ENCODE measurements at regions of chr13 and their contacts with region 1.

Region 1: DNA sequence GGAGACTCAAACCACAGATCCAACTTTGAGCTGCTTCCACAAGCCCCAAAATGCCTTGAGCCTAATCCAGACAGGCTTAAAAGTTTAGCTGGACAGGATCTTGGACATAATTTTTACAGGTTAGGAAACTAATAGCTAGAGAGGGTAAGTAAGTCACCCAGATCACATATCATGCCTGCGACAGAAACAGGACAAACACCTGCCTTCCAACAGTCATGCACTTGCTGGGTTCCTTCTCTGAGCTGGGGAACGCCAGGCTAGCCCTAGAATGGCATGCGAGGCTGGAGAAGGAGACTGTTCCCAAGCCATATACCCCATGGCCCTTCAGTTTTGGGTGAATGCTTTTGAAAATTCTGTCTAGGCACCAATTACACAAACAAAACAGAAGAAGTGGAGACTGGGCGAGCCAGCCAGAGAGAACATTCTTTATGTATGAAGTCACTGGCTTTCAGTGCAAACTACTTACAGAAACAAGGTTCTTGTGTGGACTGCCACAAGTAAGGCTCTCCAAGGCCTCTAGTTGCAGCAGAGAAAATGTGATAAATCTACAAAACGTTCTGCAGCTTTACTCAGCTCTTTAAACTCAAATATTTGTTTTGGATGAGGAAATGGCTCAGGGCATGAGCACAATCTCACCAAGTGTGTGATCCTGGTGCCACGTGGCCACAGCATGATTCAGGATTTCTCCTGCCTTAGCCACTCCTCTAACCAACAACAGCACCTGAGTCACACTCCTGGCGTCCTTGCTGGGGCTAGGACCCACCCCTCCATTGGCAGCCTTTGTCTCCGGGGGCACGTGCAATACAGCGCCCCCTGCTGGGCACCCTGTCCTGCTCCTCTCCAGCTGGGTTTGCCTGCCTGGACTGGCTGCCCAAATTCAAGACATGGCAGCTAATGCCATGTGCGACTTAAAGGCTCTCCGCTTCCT is 73.4 kb upstream of the UBL3 start:
- DNase-seq: peak; percentile 81 to 96
- H3K4me3 ChIP-seq: no peak overlapping the region
- H3K27ac ChIP-seq: peak overlapping the region; percentile 85 to 93
- H3K4me1 ChIP-seq: peaks cover 15 to 36% of the 10 kb centered on the region in 2 donors
- H3K27me3 ChIP-seq: no peaks in the 10 kb centered on the region
- CTCF ChIP-seq: peak; percentile 80 to 92 (median 91)

Region 2: DNA sequence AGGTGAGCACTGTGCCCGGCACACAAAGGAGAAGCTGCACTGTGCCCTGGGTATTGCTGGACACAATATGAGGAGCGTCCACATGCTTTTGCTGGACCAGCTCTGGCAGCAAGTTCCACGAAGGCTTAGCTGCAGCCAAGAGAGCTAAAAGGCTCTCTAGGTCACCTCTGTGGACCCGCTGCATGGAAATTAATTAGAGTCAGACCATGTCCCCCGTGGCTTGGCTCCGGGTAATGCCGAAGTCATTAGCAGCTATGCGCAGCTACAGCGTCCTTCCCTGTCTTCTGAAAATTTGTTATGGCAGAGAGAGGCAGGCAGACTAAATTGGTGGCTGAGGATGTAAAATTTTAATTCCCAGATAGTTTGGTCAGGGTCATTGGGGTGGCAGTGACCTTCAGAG is 599.9 kb before region 1 on chr13:
- intact Hi-C with region 1: no loop called
- DNase-seq: no peak
- H3K4me3 ChIP-seq: no peak overlapping the region
- H3K27ac ChIP-seq: no peak overlapping the region
- H3K4me1 ChIP-seq: peaks cover 0 to 4% of the 10 kb centered on the region in 2 donors
- H3K27me3 ChIP-seq: no peaks in the 10 kb centered on the region
- CTCF ChIP-seq: no peak

Region 3: DNA sequence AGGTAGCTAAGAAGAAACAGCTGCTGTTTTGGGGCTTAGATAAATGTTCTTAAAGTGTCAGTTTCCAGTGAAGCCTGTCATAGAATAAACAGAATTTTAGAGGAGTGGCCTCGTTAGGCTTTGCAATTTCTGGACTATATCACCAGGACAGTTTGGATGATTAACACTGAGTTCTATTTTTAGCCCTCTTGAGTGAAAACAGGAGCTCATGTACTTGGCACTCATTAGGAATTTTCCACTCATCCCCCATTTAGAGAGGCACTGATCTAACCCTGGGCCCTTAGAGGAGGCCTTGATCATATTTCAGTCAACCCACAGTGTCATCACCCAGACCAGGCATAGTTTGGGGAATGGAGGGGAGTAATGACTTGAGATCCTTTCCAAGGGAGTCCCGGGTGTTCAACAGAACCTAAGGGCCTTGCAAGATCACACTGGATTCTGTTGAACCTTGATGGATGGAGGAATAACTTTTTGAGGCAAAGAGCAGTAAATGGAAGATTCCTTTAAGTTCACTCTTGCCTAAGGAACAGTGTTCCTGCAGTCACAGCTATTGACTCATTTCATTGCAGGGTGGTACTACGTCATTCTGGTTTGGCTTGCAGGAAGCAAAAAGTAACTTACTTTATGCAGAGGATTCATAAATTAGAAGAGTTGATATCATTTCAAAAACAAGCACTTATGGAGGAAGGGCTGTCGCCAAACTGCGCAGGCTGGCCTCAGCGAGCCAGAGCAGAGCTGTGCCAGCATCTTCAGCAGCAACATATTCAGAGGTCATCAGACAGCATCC is 488.5 kb before region 1 on chr13:
- intact Hi-C with region 1: loop called (anchors 2 kb)
- DNase-seq: peak in 1 of 2 donors; percentile 63
- H3K4me3 ChIP-seq: no peak overlapping the region
- H3K27ac ChIP-seq: peak overlapping the region; percentile 88 to 90
- H3K4me1 ChIP-seq: peaks cover 22 to 59% of the 10 kb centered on the region in 2 donors
- H3K27me3 ChIP-seq: no peaks in the 10 kb centered on the region
- CTCF ChIP-seq: no peak

Region 4: DNA sequence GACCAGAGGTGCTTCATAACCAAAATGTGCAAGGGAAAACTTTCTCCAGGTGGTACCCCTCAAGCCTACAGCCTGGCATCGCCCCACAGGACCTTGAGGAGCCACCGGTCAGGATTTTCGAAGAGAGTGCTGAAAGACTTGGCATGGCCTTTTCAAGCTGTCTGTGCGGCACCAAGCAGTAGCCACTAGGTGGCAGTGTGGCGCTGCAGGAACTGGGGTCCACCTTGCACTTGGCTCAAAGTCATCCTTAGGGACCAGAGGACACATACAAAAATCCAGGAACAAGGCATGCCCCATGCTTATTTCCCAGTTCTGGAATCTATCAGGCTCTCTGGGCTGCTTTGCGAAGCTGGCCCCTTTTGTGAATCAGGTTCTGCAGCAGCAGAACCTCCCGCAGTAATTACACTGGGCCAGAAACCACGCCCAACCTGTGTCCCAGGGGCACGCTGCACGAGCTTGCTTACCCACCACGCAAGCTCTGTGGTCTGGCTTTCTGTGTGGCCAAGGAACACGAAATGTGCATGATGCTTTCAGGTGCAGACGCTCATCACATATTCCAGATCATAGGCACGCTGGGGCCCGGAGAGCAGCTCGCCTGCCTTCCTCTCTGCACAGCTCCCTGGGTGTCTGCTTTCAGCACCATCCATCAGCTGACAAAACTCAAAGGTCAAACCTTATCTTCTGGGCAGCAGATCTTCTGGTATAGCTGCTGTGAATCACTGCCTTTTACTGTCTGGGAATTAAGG is 415.5 kb before region 1 on chr13:
- intact Hi-C with region 1: loop called (anchors 5 kb)
- DNase-seq: peak in 1 of 2 donors; percentile 89
- H3K4me3 ChIP-seq: peak overlapping the region in 1 of 2 donors; percentile 16
- H3K27ac ChIP-seq: no peak overlapping the region
- H3K4me1 ChIP-seq: peaks cover 0 to 3% of the 10 kb centered on the region in 2 donors
- H3K27me3 ChIP-seq: no peaks in the 10 kb centered on the region
- CTCF ChIP-seq: peak; percentile 83 to 99 (median 95)

Region 5: DNA sequence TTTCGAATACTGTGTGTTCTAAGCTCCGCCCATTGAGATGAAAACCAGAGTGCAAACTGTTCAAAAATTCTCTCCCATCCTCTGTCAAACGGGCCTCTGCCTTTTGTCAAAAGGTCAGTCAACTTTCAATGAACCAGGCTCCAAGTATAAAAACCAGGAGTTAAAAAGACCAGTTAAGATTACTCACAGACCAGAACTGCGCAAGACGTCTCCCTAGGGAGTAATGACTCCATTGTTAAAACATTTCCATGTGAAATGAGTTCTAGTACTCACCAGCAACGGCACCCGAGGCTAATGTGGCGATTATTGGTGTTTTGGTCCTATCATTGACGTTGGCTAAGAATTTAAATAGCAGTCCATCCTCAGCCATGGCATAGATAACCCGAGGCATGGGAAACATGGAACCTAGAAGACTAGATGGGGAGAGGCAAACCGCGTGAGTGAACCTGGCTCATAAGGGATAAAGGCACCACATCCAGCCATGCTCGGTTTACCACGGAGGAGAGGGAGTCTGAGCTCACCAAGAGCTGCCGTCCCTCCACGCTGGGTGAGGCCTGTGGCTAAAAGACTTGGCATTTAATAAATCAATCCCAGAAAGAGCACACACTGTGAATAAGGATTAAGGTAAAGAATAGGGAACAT is 401.7 kb before region 1 on chr13:
- intact Hi-C with region 1: loop called (anchors 1 kb)
- DNase-seq: peak in 1 of 2 donors; percentile 89
- H3K4me3 ChIP-seq: no peak overlapping the region
- H3K27ac ChIP-seq: peak overlapping the region; percentile 50 to 65
- H3K4me1 ChIP-seq: peaks cover 3 to 10% of the 10 kb centered on the region in 2 donors
- H3K27me3 ChIP-seq: no peaks in the 10 kb centered on the region
- CTCF ChIP-seq: no peak

Region 6: DNA sequence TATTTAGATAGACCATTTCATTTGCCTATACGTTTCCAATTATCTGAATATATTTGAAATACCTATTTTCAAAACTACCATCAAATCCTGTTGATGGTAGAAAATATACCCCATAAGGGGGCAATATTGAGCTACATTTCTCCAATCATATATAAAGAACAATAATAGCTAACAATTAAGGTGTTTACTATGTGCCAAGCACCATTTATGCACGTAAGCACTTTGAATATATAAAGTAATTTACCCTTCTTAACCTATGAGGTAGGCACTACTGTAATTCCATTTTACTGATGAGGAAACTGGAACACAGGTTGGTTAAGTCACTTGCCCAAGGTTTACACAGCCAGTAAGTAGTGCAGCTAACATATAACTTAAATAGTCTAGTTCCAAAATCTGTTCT is 152.6 kb before region 1 on chr13:
- intact Hi-C with region 1: loop called (anchors 10 kb)
- DNase-seq: no peak
- H3K4me3 ChIP-seq: no peak overlapping the region
- H3K27ac ChIP-seq: no peak overlapping the region
- H3K4me1 ChIP-seq: no peaks in the 10 kb centered on the region
- H3K27me3 ChIP-seq: no peaks in the 10 kb centered on the region
- CTCF ChIP-seq: peak; percentile 16 to 49 (median 41)

Region 7: DNA sequence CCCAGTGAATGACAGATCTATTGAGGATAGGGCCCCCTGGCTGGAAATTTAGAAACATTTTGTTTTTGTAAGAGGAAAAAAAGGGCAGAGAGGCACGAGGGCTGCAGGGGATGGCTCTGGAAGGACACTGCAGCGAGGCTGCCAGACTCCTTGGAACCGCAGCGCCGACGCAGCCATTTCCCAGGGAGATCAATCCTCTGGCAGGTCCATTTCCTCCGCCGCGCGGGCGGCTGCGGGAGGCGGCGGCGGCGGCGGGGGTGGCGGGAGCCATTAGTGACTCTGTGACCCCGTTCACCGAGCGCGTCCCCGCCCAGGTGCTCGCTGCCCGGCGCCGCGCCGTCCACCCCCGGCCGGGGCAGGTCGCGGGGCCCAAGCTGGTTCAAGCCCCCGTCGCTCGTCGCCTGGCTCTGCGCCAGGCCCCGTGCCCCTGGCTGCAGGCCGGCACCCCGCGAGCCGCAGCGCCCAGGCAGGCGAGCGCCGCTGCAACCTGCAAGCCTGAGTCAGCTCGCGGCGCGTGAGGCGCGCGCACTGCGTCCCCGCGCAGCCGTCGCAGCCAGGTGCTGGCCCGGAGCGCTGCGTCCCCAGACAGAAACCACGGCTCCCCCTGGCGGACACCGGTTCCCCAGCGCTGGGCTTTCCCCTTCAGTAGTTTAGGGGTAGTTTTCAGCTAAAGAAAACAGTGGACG is 190.9 kb after region 1 on chr13:
- intact Hi-C with region 1: loop called (anchors 2 kb)
- DNase-seq: peak; percentile 56 to 95
- H3K4me3 ChIP-seq: peak overlapping the region; percentile 75 to 76
- H3K27ac ChIP-seq: peak overlapping the region; percentile 54 to 60
- H3K4me1 ChIP-seq: peaks cover 0 to 10% of the 10 kb centered on the region in 2 donors
- H3K27me3 ChIP-seq: no peaks in the 10 kb centered on the region
- CTCF ChIP-seq: peak; percentile 84 to 95 (median 88)

Region 8: DNA sequence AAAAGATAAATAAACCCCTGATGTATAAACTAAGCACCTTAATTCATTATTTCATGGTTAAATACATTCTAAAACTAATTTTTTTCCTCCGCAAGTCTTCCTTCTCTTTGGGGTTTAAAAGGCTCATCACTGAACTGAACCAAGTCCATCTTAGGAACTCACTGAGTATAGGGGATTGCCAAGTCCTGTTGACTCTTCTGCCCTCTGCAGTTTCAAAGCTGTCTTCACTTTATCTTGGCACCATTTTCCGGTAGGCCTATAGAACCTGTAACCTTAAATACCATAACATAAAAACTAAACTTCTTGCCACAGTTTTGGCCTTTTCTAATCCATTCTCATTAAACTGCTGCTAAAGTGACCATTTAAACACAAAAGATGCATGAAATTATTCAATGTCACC is 627.4 kb after region 1 on chr13:
- intact Hi-C with region 1: no loop called
- DNase-seq: no peak
- H3K4me3 ChIP-seq: no peak overlapping the region
- H3K27ac ChIP-seq: no peak overlapping the region
- H3K4me1 ChIP-seq: no peaks in the 10 kb centered on the region
- H3K27me3 ChIP-seq: no peaks in the 10 kb centered on the region
- CTCF ChIP-seq: no peak